ENCODE measurements at regions of chr1 and their contacts with region 1.

Region 1: GRCh38 chr1:246931549-246932365 is at the start of gene AHCTF1:
- DNase-seq: peak; percentile 99
- H3K4me3 ChIP-seq: peak within 1 kb of the TSS; percentile 91 to 95 (median 95)
- H3K27ac ChIP-seq: peak within 1 kb of the TSS; percentile 74
- H3K4me1 ChIP-seq: peaks cover 8% of the 10 kb centered on the region
- H3K27me3 ChIP-seq: no peaks in the 10 kb centered on the region
- CTCF ChIP-seq: no peak
- POLR2A ChIP-seq: peak; percentile 98
- total RNA-seq, gene AHCTF1: 30.7 and 32.1 TPM in 2 replicates

Region 2: GRCh38 chr1:246921481-246921880 is 10.3 kb before region 1 on chr1:
- CTCF ChIA-PET with region 1: interaction called, 3 read pairs
- POLR2A ChIA-PET with region 1: no interaction called
- dilution Hi-C with region 1: no loop called
- intact Hi-C with region 1: loop called (anchors 2 kb)
- DNase-seq: no peak
- H3K4me3 ChIP-seq: no peak overlapping the region
- H3K27ac ChIP-seq: no peak overlapping the region
- H3K4me1 ChIP-seq: no peaks in the 10 kb centered on the region
- H3K27me3 ChIP-seq: no peaks in the 10 kb centered on the region
- CTCF ChIP-seq: no peak
- POLR2A ChIP-seq: no peak

Region 3: DNA sequence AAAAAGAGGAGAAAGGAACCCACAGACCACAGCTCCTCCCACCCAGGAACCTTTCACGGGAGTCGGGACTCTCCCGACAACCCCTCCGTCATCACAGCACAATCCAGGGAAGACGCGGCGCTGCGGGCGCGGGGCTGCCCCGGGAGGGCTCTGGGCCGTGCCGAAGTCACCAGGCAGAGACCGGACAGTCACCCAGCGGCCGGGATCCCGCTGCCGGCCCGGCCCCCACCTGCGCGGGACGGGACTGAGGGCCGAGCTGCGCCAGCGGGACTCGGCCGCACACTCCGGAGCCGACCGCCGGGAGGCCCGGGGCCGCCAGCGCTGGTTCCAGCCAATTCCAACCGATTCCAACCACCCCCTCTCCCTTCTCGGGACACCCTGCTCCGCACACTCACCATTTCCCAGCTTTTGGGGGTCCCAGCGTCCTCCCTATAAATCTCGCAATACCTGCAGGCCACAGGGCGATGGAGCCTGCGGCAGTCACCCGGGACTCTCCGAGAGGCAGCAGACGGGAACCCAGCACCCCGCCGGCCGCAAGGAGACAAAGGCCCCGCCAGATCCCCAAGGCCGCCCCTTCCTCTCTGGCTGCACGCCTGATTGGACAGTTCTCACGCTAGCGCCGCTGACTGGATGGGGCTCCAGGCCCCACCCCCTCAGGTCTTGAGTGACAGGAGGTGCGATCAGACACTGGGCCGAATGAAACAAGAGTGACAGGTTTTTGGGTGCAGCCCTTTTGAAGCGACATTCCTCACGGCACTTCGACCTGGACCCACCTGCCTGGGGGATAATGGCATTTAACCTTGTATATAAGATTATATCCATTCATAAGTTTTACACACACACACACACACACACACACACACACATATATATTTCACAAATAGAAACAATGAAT is 76.0 kb after region 1 on chr1 and contains the start of gene ZNF695:
- CTCF ChIA-PET with region 1: no interaction called
- POLR2A ChIA-PET with region 1: interaction called, 3 read pairs
- dilution Hi-C with region 1: no loop called
- intact Hi-C with region 1: loop called (anchors 1 kb)
- DNase-seq: peak; percentile 96
- H3K4me3 ChIP-seq: peak within 1 kb of the TSS; percentile 57 to 79 (median 73)
- H3K27ac ChIP-seq: peak within 1 kb of the TSS; percentile 25
- H3K4me1 ChIP-seq: no peaks in the 10 kb centered on the region
- H3K27me3 ChIP-seq: no peaks in the 10 kb centered on the region
- CTCF ChIP-seq: no peak
- POLR2A ChIP-seq: peak; percentile 25
- total RNA-seq, gene ZNF695: 4.8 and 5.5 TPM in 2 replicates

Region 4: GRCh38 chr1:247103859-247104591 is 172.3 kb after region 1 on chr1 and contains the start of gene ZNF669:
- CTCF ChIA-PET with region 1: no interaction called
- POLR2A ChIA-PET with region 1: no interaction called
- dilution Hi-C with region 1: no loop called
- intact Hi-C with region 1: loop called (anchors 2 kb)
- DNase-seq: peak; percentile 95
- H3K4me3 ChIP-seq: peak within 1 kb of the TSS; percentile 91 to 98 (median 91)
- H3K27ac ChIP-seq: peak within 1 kb of the TSS; percentile 82
- H3K4me1 ChIP-seq: peaks cover 4% of the 10 kb centered on the region
- H3K27me3 ChIP-seq: no peaks in the 10 kb centered on the region
- CTCF ChIP-seq: no peak
- POLR2A ChIP-seq: peak; percentile 83
- total RNA-seq, gene ZNF669: 7.8 and 9.7 TPM in 2 replicates

Region 5: GRCh38 chr1:247331172-247331991 is 399.6 kb after region 1 on chr1 and contains the start of gene ZNF496:
- CTCF ChIA-PET with region 1: no interaction called
- POLR2A ChIA-PET with region 1: no interaction called
- dilution Hi-C with region 1: no loop called
- intact Hi-C with region 1: loop called (anchors 1 kb)
- DNase-seq: peak; percentile 78
- H3K4me3 ChIP-seq: peak within 1 kb of the TSS; percentile 57 to 82 (median 73)
- H3K27ac ChIP-seq: peak within 1 kb of the TSS; percentile 86
- H3K4me1 ChIP-seq: peaks cover 17% of the 10 kb centered on the region
- H3K27me3 ChIP-seq: no peaks in the 10 kb centered on the region
- CTCF ChIP-seq: no peak
- POLR2A ChIP-seq: peak; percentile 37
- total RNA-seq, gene ZNF496: 42.4 and 46.0 TPM in 2 replicates